Panc1 (cell line): ENCODE measurements at regions of chr22 and their contacts with region 1.

Region 1: DNA sequence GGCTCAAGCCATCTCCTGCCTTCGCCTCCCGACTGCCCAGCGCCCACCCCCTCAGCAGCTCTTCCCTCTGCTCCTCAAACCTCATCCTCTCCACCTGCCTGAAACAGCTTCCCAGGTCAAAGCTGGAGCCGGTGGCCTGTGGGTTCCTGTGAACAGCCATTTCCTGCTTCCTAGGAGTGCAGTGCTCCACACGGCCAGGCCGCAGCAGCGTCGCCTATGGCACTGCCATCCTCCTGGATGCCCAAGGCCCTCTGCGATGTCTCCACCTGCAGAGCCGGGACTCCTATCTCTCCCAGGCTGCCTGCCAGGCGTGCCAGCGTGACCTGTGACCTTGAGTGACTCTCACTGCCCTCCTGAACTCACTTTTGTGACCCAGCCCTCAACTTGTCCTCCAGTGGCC is 24.6 kb downstream of the PPM1F start:
- DNase-seq: no peak
- ATAC-seq: no peak
- H3K4me3 ChIP-seq: no peak overlapping the region
- H3K27ac ChIP-seq: no peak overlapping the region
- H3K4me1 ChIP-seq: no peaks in the 10 kb centered on the region
- H3K27me3 ChIP-seq: no peaks in the 10 kb centered on the region
- CTCF ChIP-seq: no peak

Region 2: DNA sequence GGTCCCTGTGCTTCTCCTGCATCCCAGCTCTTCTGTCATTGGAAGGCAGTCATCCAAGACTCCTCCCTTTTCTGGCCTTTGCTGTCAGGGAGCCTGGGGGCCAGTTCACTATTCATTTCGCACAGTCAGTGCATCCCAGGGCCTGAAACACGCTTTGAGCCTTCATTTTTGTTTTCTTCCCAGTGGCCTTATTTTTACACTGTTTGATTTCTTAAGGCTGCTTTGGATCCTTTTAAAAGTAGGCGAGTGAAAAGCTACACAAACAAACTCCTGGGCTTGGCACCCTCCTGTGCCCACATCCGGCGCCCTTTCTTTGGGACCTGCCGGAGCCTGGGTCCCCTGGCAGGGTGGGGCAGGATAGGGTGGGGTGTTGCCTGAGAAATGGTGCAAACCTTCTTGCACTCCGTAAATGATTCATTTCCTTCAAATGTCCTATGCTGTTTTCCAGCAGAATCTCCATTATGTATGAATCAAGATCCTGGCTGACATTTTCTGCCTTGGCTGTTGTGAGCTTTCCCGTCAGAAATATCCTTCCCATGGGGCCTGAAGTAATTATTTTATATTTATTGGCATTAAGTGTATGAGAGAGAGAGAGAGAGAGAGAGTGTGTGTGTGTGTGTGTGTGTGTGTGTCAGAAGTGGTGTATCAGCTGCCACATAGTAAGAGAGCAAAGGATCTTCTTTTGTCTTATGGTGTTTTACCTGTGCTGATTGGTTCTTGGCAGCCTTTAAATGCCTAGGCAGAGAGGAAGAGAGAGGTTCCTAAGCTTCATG is 1297.9 kb after region 1 on chr22:
- CTCF ChIA-PET with region 1: no interaction called
- POLR2A ChIA-PET with region 1: interaction called, 15 read pairs
- in situ Hi-C with region 1: no loop called
- intact Hi-C with region 1: no loop called
- DNase-seq: no peak
- ATAC-seq: no peak
- H3K4me3 ChIP-seq: no peak overlapping the region
- H3K27ac ChIP-seq: no peak overlapping the region
- H3K4me1 ChIP-seq: no peaks in the 10 kb centered on the region
- H3K27me3 ChIP-seq: no peaks in the 10 kb centered on the region
- CTCF ChIP-seq: no peak